ENCODE measurements at regions of chr7 and their contacts with region 1.

Region 1: GRCh38 chr7:5450549-5451372 is 27.1 kb upstream of the TNRC18 start:
- DNase-seq: peak; percentile 94
- H3K4me3 ChIP-seq: no peak overlapping the region; a peak in 1 of 4 replicates
- H3K27ac ChIP-seq: no peak overlapping the region
- H3K4me1 ChIP-seq: peaks cover 0 to 3% of the 10 kb centered on the region in 2 experiments; a peak in 1 of 4 replicates
- H3K27me3 ChIP-seq: no peaks in the 10 kb centered on the region
- CTCF ChIP-seq: peak; percentile 78
- EP300 ChIP-seq: no peak
- RAD21 ChIP-seq: peak; percentile 85

Region 2: GRCh38 chr7:5284304-5285281 is 166.2 kb before region 1 on chr7:
- CTCF ChIA-PET with region 1: interaction called, 10 read pairs
- POLR2A ChIA-PET with region 1: no interaction called
- DNase-seq: peak; percentile 90
- H3K4me3 ChIP-seq: peak overlapping the region in 1 of 2 experiments; percentile 63; a peak in 1 of 4 replicates
- H3K27ac ChIP-seq: peak overlapping the region in 1 of 2 experiments; percentile 87; a peak in 2 of 4 replicates
- H3K4me1 ChIP-seq: peaks cover 4 to 16% of the 10 kb centered on the region in 2 experiments; a peak in 1 of 4 replicates
- H3K27me3 ChIP-seq: no peaks in the 10 kb centered on the region
- CTCF ChIP-seq: peak; percentile 39; the same call in 1 of the 2 replicates
- EP300 ChIP-seq: peak in 1 of 2 experiments; percentile 59; a peak in 1 of 4 replicates
- RAD21 ChIP-seq: peak; percentile 86

Region 3: DNA sequence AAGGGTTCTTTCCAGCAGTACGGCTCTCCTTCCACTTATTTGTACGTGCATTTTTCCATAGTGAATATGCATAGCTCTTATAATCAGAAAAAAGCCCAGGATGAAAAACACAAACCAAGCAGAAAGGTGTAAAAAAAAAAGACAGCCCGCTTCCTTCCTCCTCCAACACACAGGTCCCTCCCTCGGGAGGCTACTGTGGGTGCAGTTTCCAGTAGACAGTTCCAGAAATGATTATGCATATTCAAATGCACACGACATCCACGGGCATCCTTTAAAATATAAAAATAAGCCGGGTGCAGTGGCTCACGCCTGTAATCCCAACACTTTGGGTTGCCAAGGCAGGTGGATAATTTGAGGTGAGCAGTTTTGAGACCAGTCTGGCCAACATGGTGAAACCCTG is 87.0 kb before region 1 on chr7:
- CTCF ChIA-PET with region 1: interaction called, 150 read pairs
- POLR2A ChIA-PET with region 1: no interaction called
- DNase-seq: no peak
- H3K4me3 ChIP-seq: no peak overlapping the region
- H3K27ac ChIP-seq: no peak overlapping the region
- H3K4me1 ChIP-seq: no peaks in the 10 kb centered on the region
- H3K27me3 ChIP-seq: no peaks in the 10 kb centered on the region
- CTCF ChIP-seq: no peak
- EP300 ChIP-seq: no peak
- RAD21 ChIP-seq: no peak

Region 4: GRCh38 chr7:5396999-5397663 is 53.6 kb before region 1 on chr7:
- CTCF ChIA-PET with region 1: interaction called, 11 read pairs
- POLR2A ChIA-PET with region 1: no interaction called
- DNase-seq: peak; percentile 67
- H3K4me3 ChIP-seq: no peak overlapping the region
- H3K27ac ChIP-seq: no peak overlapping the region
- H3K4me1 ChIP-seq: no peaks in the 10 kb centered on the region
- H3K27me3 ChIP-seq: no peaks in the 10 kb centered on the region
- CTCF ChIP-seq: no peak
- EP300 ChIP-seq: no peak
- RAD21 ChIP-seq: no peak

Region 5: GRCh38 chr7:5466551-5466950 is 15.8 kb after region 1 on chr7:
- CTCF ChIA-PET with region 1: interaction called, 13 read pairs
- POLR2A ChIA-PET with region 1: no interaction called
- DNase-seq: no peak
- H3K4me3 ChIP-seq: no peak overlapping the region
- H3K27ac ChIP-seq: no peak overlapping the region
- H3K4me1 ChIP-seq: no peaks in the 10 kb centered on the region; a peak in 1 of 4 replicates
- H3K27me3 ChIP-seq: no peaks in the 10 kb centered on the region
- CTCF ChIP-seq: no peak
- EP300 ChIP-seq: no peak
- RAD21 ChIP-seq: no peak

Region 6: DNA sequence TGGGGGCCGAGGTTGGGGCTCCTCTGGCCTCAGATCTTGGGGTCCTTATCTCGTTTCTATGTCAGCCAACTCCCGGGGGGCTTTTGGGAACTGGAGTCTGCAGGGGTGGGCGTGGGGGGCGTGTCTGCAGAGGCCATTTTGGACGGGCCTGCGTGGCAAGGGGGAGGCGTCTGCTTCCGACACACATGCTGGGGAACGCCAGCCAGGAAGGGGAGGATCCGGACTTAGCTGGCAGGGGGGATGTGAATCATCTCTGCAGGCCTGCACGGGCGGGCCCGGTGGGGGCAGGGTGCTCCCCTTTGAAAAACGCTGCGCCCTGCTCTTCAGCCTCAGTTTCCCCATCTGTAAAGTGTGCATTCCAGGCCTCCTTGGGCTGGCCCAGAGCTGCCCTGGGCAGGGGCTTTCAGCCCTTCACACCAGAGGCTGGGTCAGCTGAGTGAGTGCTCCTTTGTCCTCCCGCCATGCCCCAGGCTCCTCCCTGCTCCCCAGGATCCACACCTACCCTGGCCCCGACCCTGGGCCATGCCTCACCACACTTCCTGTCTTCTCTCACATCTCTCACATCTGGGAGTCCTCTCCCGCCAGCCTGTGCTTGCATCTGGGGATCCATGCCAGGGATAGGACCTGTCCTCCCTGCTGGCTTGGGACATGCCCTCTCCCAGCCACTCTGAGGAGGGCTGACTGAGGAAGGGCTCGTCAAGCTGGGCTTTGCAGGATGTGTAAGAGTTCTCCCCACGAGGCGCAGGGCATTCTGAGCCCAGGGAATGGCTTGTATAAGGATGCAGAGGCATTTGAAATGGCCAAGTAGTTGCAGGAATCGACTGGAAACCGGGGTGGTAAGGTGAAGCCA is 145.5 kb after region 1 on chr7:
- CTCF ChIA-PET with region 1: no interaction called
- POLR2A ChIA-PET with region 1: no interaction called
- DNase-seq: peak; percentile 90
- H3K4me3 ChIP-seq: peak overlapping the region; percentile 63 to 99
- H3K27ac ChIP-seq: peak overlapping the region; percentile 88 to 92
- H3K4me1 ChIP-seq: peaks cover 34 to 42% of the 10 kb centered on the region in 2 experiments; a peak in 3 of 4 replicates
- H3K27me3 ChIP-seq: no peaks in the 10 kb centered on the region
- CTCF ChIP-seq: no peak
- EP300 ChIP-seq: peak; percentile 5 to 77; a peak in 2 of 4 replicates
- RAD21 ChIP-seq: peak; percentile 8; the same call in 1 of the 2 replicates

Measured in SK-N-SH (cell line).